ENCODE measurements at regions of chr5 and their contacts with region 1.

Region 1: DNA sequence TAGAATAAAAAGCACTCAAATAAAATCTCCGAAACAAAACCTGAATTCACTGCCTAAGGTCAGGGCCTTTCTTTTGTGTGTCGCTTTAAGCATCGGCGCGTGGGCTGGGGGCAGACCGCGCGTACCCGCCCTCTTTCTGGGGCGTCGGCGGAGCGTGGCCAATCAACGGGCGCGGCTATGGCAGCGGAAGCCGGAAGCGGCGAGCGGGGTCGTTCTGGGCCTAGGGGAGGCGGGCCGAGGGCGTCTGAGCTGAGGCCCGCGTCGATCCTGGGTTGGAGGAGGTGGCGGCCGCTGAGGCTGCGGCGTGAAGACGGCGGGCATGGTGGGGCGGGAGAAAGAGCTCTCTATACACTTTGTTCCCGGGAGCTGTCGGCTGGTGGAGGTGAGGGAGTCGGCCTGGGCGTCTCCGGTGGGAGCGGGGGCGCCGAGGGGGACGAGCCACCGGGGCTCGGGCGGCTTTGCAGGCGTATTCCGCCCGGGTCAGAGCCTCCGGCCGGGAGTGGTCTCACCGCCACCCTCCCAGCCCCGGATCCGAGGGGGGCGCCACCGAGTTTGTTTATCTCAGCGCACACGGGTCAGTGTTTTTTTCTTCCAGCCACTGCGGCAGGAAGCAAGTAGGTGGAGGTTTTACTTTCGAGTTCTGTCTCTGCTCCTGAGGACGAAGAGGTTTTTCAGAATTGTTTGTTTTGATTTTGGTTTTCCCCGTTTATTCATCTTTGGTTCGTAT is at the start of gene MAT2B:
- DNase-seq: peak; percentile 97
- H3K4me3 Mint-ChIP-seq: peak within 1 kb of the TSS; percentile 95
- H3K27ac Mint-ChIP-seq: peak within 1 kb of the TSS; percentile 100
- H3K4me1 Mint-ChIP-seq: peaks cover 28% of the 10 kb centered on the region
- H3K27me3 Mint-ChIP-seq: no peaks in the 10 kb centered on the region
- total RNA-seq, gene MAT2B: 114 to 122 TPM

Region 2: GRCh38 chr5:163437309-163438182 is 68.0 kb before region 1 on chr5 and contains the start of gene CCNG1:
- CTCF ChIA-PET with region 1: interaction called, 3 read pairs
- POLR2A ChIA-PET with region 1: interaction called, 5 read pairs
- intact Hi-C with region 1: loop called (anchors 1 kb)
- DNase-seq: peak; percentile 94
- H3K4me3 Mint-ChIP-seq: peak within 1 kb of the TSS; percentile 87
- H3K27ac Mint-ChIP-seq: peak within 1 kb of the TSS; percentile 63
- H3K4me1 Mint-ChIP-seq: peaks cover 41% of the 10 kb centered on the region
- H3K27me3 Mint-ChIP-seq: peaks cover 2% of the 10 kb centered on the region
- total RNA-seq, gene CCNG1: 139 to 164 TPM

Region 3: GRCh38 chr5:163459922-163460766 is 45.4 kb before region 1 on chr5 and contains the starts of genes HMMR and NUDCD2:
- CTCF ChIA-PET with region 1: interaction called, 47 read pairs
- POLR2A ChIA-PET with region 1: interaction called, 235 read pairs
- intact Hi-C with region 1: loop called (anchors 1 kb)
- DNase-seq: peak; percentile 97
- H3K4me3 Mint-ChIP-seq: peak within 1 kb of the TSS; percentile 96
- H3K27ac Mint-ChIP-seq: peak within 1 kb of the TSS; percentile 100
- H3K4me1 Mint-ChIP-seq: peaks cover 35% of the 10 kb centered on the region
- H3K27me3 Mint-ChIP-seq: peaks cover 4% of the 10 kb centered on the region
- total RNA-seq, gene HMMR: 109 to 118 TPM
- total RNA-seq, gene NUDCD2: 46.4 to 48.6 TPM

Region 4: GRCh38 chr5:163473635-163474243 is 31.8 kb before region 1 on chr5:
- CTCF ChIA-PET with region 1: interaction called, 27 read pairs
- POLR2A ChIA-PET with region 1: interaction called, 3 read pairs
- intact Hi-C with region 1: loop called (anchors 1 kb)
- DNase-seq: no peak
- H3K4me3 Mint-ChIP-seq: no peak overlapping the region
- H3K27ac Mint-ChIP-seq: no peak overlapping the region
- H3K4me1 Mint-ChIP-seq: peaks cover 6% of the 10 kb centered on the region
- H3K27me3 Mint-ChIP-seq: no peaks in the 10 kb centered on the region

Region 5: DNA sequence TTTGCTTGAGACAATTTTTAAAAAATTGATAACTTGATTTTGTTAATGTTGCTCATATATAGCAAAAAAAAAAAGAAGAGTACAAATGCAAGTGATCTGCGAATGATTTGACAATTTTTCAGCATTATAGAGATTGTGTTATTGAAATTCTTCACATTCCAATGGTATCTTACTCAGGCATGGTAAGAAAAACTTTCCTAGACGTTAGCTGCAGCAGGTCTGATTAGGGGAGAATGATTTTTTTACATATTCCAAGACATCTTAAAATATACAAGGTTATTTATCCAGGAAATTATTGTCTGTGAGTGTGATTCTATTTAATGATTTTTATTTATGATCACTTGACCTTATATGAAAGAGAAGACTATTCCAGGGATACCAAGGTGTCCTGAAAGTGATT is 361.8 kb after region 1 on chr5:
- CTCF ChIA-PET with region 1: no interaction called
- POLR2A ChIA-PET with region 1: no interaction called
- intact Hi-C with region 1: no loop called
- DNase-seq: no peak
- H3K4me3 Mint-ChIP-seq: no peak overlapping the region
- H3K27ac Mint-ChIP-seq: no peak overlapping the region
- H3K4me1 Mint-ChIP-seq: no peaks in the 10 kb centered on the region
- H3K27me3 Mint-ChIP-seq: no peaks in the 10 kb centered on the region

Measured in activated CD4-positive, alpha-beta memory T cell treated with anti-CD3 and anti-CD28 coated beads for 36 hours (primary cell).